ENCODE measurements at regions of chr7 and their contacts with region 1.

Region 1: GRCh38 chr7:15015545-15016326 is 113.2 kb upstream of the DGKB start:
- DNase-seq: no peak
- ATAC-seq: peak; percentile 89

Region 2: GRCh38 chr7:14717816-14718215 is 297.9 kb before region 1 on chr7:
- intact Hi-C with region 1: loop called (anchors 1 kb)
- DNase-seq: no peak
- ATAC-seq: no peak

Region 3: DNA sequence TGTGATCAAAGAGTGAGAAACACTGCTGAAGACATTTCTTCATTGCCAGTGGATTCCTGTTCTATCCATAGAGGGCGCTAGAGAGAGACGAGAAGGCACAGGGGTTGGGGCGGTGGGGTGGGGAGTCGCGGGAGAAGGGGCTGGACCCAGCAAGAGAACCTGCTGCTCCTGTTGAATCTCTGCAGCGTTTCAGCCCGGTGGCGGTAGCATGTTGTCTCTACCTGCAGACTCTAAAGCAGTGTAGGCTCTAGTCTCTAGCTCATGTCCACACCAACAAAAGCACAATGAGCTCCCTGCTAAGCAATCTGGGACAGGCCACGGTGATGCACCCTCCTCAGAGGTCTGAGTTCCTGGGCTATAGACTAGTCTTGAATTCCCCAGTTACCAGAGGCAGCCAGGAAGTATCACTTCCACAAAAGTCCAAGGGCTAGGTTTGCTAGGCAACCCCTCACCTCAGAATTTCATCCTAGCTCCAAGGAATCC is 280.9 kb before region 1 on chr7:
- intact Hi-C with region 1: loop called (anchors 5 kb)
- DNase-seq: no peak
- ATAC-seq: peak; percentile 5

Region 4: DNA sequence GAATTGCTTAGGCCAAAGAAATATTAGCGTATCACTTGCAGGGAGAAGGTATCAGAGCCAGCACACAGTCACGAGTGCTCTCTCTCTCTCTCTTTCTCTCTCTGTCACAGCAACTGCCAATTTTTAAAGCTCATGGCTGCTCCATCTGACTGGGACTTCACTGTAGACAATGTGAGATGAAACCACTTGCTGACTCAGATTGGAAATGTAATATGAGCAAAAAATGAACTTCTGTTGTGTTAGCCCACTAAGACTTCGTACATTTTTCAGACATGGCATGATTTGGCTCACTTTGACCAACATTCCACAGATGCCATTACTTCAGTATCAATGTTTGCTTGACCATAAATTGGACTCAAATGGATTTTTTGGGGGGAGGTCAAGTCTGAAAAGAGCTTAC is 181.3 kb before region 1 on chr7:
- intact Hi-C with region 1: loop called (anchors 2 kb)
- DNase-seq: no peak
- ATAC-seq: peak; percentile 69

Region 5: DNA sequence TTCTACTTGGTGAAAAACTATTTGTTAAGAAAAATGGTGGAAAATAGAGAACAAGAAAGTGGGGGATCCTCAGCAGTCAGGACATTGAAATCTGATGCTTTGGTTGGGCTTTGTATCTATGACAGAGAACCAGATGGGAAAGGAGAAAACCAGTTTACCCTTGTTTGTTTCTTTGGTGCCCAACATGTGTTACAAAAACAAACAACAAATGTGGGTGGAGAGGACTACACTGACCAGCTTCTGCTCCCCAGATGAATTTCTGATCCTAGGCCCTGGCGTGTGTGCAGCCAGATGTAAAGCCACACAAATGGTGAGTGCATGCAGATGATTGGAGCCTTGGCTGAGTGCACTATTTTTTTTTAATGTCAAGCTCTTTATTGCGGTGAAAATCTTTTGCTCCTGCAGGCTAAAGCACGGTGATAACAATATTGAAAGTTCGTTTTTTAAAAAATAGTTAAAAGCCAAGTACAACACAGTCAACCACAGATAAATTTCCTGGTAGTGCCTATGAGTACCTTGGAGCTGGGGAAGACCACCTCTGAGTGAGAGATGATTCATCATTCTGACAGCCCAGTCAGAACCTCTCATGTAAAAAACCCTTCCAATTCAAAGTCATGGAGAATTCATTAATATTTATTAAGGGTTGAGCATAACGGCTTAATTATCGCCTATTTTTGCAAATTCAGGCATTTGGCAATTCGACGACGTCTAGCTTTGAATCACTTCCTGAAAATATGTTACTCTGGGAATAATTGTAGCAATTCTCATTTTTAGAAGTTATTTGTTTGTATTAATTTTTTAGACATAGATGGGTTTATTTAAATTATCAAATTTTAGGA is 382.4 kb after region 1 on chr7:
- intact Hi-C with region 1: no loop called
- DNase-seq: no peak
- ATAC-seq: no peak

Measured in Right ventricle myocardium inferior (tissue), 1 donor.